Activated naive CD4-positive, alpha-beta T cell treated with anti-CD3 and anti-CD28 coated beads, Interleukin-2, amount 10 ng/mL, durations not matched to agents 7 days and 5 days (primary cell): ENCODE measurements at regions of chr14 and their contacts with region 1.

Region 1: GRCh38 chr14:22986508-22987054 is 4.2 kb upstream of the AJUBA start:
- DNase-seq: peak; percentile 94
- H3K4me3 Mint-ChIP-seq: no peak overlapping the region
- H3K27ac Mint-ChIP-seq: no peak overlapping the region
- H3K4me1 Mint-ChIP-seq: no peaks in the 10 kb centered on the region
- H3K27me3 Mint-ChIP-seq: no peaks in the 10 kb centered on the region

Region 2: DNA sequence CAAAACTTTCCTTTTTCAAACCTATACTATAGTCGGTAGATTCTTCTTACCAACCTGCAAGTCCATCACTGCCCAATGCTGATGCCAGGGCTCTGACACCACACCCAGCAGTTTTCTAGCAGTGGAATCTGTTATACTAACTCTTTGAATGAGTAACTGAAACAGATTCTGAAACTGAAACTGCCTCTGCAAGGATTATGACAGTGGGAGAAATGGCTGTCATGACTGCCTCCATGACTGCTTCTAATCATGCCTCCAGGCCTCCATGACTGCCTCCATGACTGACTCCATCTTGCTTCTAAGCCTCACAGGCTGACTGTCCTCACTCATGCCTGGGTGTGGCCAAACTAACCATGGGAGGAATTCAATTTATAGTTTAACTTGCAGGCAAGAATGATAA is 249.5 kb before region 1 on chr14:
- CTCF ChIA-PET with region 1: no interaction called
- DNase-seq: peak; percentile 56
- H3K4me3 Mint-ChIP-seq: no peak overlapping the region
- H3K27ac Mint-ChIP-seq: peak overlapping the region; percentile 85
- H3K4me1 Mint-ChIP-seq: peaks cover 32% of the 10 kb centered on the region
- H3K27me3 Mint-ChIP-seq: peaks cover 7% of the 10 kb centered on the region

Region 3: GRCh38 chr14:22882529-22883172 is 103.9 kb before region 1 on chr14:
- CTCF ChIA-PET with region 1: no interaction called
- DNase-seq: peak; percentile 38
- H3K4me3 Mint-ChIP-seq: no peak overlapping the region
- H3K27ac Mint-ChIP-seq: no peak overlapping the region
- H3K4me1 Mint-ChIP-seq: peaks cover 28% of the 10 kb centered on the region
- H3K27me3 Mint-ChIP-seq: peaks cover 47% of the 10 kb centered on the region

Region 4: DNA sequence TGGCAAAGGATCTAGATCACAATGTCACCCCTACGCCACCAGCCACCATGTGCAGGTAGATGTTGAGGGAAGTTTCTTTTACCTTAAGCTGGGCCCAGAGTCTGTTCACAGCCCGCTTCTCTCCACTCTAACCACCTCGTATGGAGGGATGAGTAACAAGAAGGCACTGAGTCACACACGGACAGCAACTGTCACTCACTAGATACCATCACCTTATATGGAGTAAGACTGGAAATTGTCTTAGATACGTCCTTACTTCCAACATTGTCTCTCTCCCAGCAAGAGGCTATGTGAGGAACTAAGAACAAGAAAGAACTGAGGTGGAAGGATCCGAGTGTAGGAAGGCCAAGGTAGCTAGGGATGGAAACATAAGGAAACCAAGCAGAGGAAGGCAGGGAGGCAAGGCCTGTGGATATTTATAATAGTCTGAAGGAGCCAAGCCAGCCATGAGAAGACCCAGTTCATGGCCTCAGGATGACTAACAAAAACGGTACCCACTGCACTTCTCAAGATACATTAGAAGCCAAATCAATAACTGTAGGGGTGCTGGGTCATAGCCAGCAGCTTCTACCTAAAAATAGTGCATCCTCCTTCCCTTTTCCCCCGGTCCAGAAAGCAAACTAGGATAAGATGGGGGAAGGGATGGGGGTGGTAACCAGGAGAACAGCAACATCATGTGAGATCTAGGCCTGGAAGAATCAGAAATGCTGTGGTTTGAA is 88.0 kb before region 1 on chr14:
- CTCF ChIA-PET with region 1: no interaction called
- DNase-seq: no peak
- H3K4me3 Mint-ChIP-seq: no peak overlapping the region
- H3K27ac Mint-ChIP-seq: no peak overlapping the region
- H3K4me1 Mint-ChIP-seq: peaks cover 19% of the 10 kb centered on the region
- H3K27me3 Mint-ChIP-seq: no peaks in the 10 kb centered on the region

Region 5: GRCh38 chr14:22929104-22929847 is 57.3 kb before region 1 on chr14 and contains the start of gene PRMT5:
- CTCF ChIA-PET with region 1: interaction called, 20 read pairs
- DNase-seq: peak; percentile 99
- H3K4me3 Mint-ChIP-seq: no peak within 1 kb of the TSS
- H3K27ac Mint-ChIP-seq: no peak within 1 kb of the TSS
- H3K4me1 Mint-ChIP-seq: peaks cover 26% of the 10 kb centered on the region
- H3K27me3 Mint-ChIP-seq: no peaks in the 10 kb centered on the region

Region 6: DNA sequence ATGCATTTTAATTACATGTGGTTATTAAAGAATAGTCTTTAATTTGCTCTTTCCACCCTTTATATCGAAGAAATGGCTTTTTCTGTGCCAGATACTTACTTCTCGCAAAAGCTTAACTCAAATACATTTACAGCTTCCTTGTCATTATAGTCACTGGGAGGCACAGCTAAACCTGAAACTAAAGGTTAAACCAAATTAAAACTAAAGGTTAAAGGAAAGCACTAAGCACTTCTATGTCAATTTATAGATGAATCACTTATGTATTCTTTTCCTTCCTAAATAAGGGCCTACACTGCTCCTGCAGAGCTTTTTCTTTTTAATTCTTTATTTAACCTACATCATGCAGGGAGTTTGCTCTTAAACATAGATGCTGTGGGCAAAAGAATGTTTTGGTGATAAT is 14.3 kb after region 1 on chr14:
- CTCF ChIA-PET with region 1: interaction called, 83 read pairs
- DNase-seq: no peak
- H3K4me3 Mint-ChIP-seq: no peak overlapping the region
- H3K27ac Mint-ChIP-seq: no peak overlapping the region
- H3K4me1 Mint-ChIP-seq: peaks cover 6% of the 10 kb centered on the region
- H3K27me3 Mint-ChIP-seq: no peaks in the 10 kb centered on the region

Region 7: GRCh38 chr14:23013054-23013748 is 26.6 kb after region 1 on chr14:
- CTCF ChIA-PET with region 1: interaction called, 19 read pairs
- DNase-seq: no peak
- H3K4me3 Mint-ChIP-seq: no peak overlapping the region
- H3K27ac Mint-ChIP-seq: no peak overlapping the region
- H3K4me1 Mint-ChIP-seq: peaks cover 32% of the 10 kb centered on the region
- H3K27me3 Mint-ChIP-seq: no peaks in the 10 kb centered on the region

Region 8: GRCh38 chr14:23057757-23058653 is 71.4 kb after region 1 on chr14:
- CTCF ChIA-PET with region 1: interaction called, 633 read pairs
- DNase-seq: peak; percentile 92
- H3K4me3 Mint-ChIP-seq: peak overlapping the region; percentile 83
- H3K27ac Mint-ChIP-seq: peak overlapping the region; percentile 71
- H3K4me1 Mint-ChIP-seq: peaks cover 21% of the 10 kb centered on the region
- H3K27me3 Mint-ChIP-seq: peaks cover 25% of the 10 kb centered on the region

Region 9: DNA sequence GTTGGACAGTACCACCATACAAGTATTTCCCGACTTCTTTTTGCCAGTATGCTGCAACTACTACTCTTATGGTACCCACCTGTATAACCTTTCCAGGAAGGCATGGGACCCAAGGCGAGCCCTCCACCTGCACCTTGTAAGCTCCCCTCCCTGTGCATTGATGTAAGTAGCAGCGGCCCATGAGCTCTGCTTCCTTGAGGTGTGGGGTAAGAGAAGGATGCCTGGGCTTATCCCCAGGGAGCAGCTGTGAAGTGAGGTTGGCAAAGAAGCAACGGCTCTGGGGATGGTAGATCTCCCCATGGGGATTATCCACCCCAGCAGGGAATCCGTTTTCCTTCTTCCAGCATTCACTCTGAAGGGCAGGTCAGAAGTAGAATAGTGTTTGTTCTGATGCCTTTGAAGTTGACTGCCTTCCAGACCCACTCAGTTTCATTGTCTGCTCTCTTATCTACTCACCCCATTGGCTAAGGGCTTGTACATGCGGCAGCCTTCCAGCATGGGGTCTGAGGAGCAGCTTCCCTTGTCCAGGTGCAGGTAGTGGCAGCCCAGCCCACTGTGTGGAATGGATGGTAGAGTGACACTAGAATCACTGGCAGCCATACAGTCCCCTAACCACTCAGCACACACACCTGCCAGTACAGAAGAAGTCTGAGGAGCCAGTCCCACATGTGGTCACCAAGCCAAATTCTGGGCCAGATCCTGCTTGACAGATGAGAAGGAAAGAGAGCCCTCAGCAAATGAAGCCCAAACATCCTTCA is 114.8 kb after region 1 on chr14:
- CTCF ChIA-PET with region 1: no interaction called
- DNase-seq: no peak
- H3K4me3 Mint-ChIP-seq: no peak overlapping the region
- H3K27ac Mint-ChIP-seq: no peak overlapping the region
- H3K4me1 Mint-ChIP-seq: peaks cover 18% of the 10 kb centered on the region
- H3K27me3 Mint-ChIP-seq: peaks cover 22% of the 10 kb centered on the region